ENCODE measurements at regions of chrX and their contacts with region 1.

Region 1: DNA sequence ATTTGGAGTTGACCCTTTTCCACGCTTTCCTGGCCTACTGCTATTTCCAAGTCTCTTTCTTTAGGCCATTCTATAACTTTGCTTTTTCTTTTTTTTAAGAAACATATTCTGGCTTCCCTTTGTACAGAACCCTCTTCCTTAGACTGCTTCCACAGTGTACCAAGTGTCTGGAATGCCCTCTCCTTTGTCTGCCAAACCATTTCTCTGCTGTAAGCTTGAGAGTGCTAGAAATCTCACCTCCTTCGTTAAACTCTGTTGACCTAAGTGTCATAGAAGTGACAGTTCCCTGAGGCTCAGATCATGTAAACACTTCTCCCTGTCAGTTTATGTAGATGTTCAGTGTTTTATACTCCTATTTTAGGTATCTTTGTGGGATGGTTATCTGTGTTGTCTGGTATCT is 108.4 kb downstream of the EDA start:
- DNase-seq: no peak
- H3K4me3 ChIP-seq: no peak overlapping the region
- CTCF ChIP-seq: no peak
- POLR2A ChIP-seq: no peak

Region 2: GRCh38 chrX:69243276-69243675 is 481.0 kb before region 1 on chrX:
- intact Hi-C with region 1: loop called (anchors 5 kb)
- DNase-seq: peak in 1 of 2 donors; percentile 1
- H3K4me3 ChIP-seq: no peak overlapping the region
- CTCF ChIP-seq: no peak
- POLR2A ChIP-seq: no peak

Region 3: GRCh38 chrX:69289046-69289792 is 435.1 kb before region 1 on chrX:
- intact Hi-C with region 1: no loop called
- DNase-seq: no peak
- H3K4me3 ChIP-seq: no peak overlapping the region
- CTCF ChIP-seq: no peak
- POLR2A ChIP-seq: no peak